Panc1 (cell line): ENCODE measurements at regions of chr6 and their contacts with region 1.

Region 1: DNA sequence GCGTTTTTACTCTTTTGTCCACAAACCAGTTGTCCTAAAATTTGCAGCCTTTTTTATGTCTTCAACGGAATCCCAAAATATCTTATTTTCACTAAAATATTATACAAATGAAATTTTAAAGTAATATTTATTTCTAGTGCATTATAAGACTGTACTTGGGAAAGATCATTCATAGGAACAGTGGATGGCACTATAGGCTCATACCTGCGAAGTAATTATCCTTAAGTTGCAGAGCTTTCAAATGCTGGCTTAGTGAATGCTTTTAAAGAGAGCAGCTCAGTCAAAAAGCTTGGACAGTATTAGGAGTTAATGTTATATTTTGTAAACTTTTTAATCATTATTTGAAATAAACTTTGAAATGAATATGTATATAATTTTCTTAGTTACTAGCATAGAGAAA is 254.9 kb downstream of the CDKAL1 start:
- DNase-seq: no peak
- ATAC-seq: no peak
- H3K4me3 ChIP-seq: no peak overlapping the region
- H3K27ac ChIP-seq: no peak overlapping the region
- H3K4me1 ChIP-seq: no peaks in the 10 kb centered on the region
- H3K27me3 ChIP-seq: no peaks in the 10 kb centered on the region
- CTCF ChIP-seq: peak; percentile 27; the same call in 1 of the 2 replicates

Region 2: GRCh38 chr6:21264288-21265033 is 475.3 kb after region 1 on chr6:
- CTCF ChIA-PET with region 1: interaction called, 12 read pairs
- POLR2A ChIA-PET with region 1: no interaction called
- in situ Hi-C with region 1: no loop called
- intact Hi-C with region 1: no loop called
- DNase-seq: no peak
- ATAC-seq: no peak
- H3K4me3 ChIP-seq: no peak overlapping the region
- H3K27ac ChIP-seq: no peak overlapping the region
- H3K4me1 ChIP-seq: no peaks in the 10 kb centered on the region; the same call in 1 of the 2 replicates
- H3K27me3 ChIP-seq: no peaks in the 10 kb centered on the region
- CTCF ChIP-seq: no peak

Region 3: GRCh38 chr6:22236626-22237414 is 1447.7 kb after region 1 on chr6:
- CTCF ChIA-PET with region 1: no interaction called
- POLR2A ChIA-PET with region 1: no interaction called
- in situ Hi-C with region 1: no loop called
- intact Hi-C with region 1: no loop called
- DNase-seq: no peak
- ATAC-seq: no peak
- H3K4me3 ChIP-seq: no peak overlapping the region
- H3K27ac ChIP-seq: no peak overlapping the region
- H3K4me1 ChIP-seq: no peaks in the 10 kb centered on the region
- H3K27me3 ChIP-seq: no peaks in the 10 kb centered on the region
- CTCF ChIP-seq: no peak